Adrenal gland (tissue), 19 donors: ENCODE measurements at regions of chr22 and their contacts with region 1.

Region 1: GRCh38 chr22:17699696-17700340 is 61.3 kb downstream of the BCL2L13 start:
- DNase-seq: no peak
- H3K4me3 ChIP-seq: no peak overlapping the region
- H3K27ac ChIP-seq: no peak overlapping the region
- H3K4me1 ChIP-seq: no peaks in the 10 kb centered on the region
- H3K27me3 ChIP-seq: no peaks in the 10 kb centered on the region
- CTCF ChIP-seq: no peak
- POLR2A ChIP-seq: no peak

Region 2: DNA sequence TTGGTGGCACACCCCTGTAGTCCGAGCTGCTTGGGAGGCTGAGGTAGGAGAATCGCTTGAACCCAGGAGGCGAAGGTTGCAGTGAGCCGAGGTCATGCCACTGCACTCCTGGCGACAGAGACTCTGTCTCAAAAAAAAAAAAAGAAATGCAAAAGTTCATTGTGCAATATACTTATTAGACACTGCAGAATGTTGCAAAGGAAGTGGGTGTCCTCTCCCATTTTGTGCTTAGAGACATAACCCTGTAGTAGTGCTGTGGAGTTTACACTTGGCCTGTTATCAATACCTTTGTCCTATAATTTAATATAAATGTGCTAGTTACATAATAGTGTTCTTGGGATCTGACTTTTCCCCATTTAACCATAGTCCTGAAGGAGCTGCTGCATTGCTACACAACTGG is 51.8 kb before region 1 on chr22:
- intact Hi-C with region 1: loop called in 1 of 2 experiments (anchors 10 kb)
- DNase-seq: peak in 1 of 7 donors; percentile 14
- H3K4me3 ChIP-seq: no peak overlapping the region
- H3K27ac ChIP-seq: no peak overlapping the region
- H3K4me1 ChIP-seq: no peaks in the 10 kb centered on the region
- H3K27me3 ChIP-seq: no peaks in the 10 kb centered on the region
- CTCF ChIP-seq: no peak
- POLR2A ChIP-seq: no peak